CD8-positive, alpha-beta T cell (primary cell): ENCODE measurements at regions of chr19 and their contacts with region 1.

Region 1: GRCh38 chr19:36915992-36916830 is at the starts of genes ZNF568 and ZNF829:
- DNase-seq: peak; percentile 82 to 97 (median 92)
- ATAC-seq: peak; percentile 97
- H3K4me3 ChIP-seq: peak within 1 kb of the TSS; percentile 75 to 79
- H3K4me3 Mint-ChIP-seq: peak within 1 kb of the TSS; percentile 89
- H3K27ac ChIP-seq: peak within 1 kb of the TSS; percentile 80 to 95
- H3K27ac Mint-ChIP-seq: peak within 1 kb of the TSS; percentile 95
- H3K4me1 ChIP-seq: peaks cover 10% of the 10 kb centered on the region
- H3K4me1 Mint-ChIP-seq: peaks cover 36% of the 10 kb centered on the region
- H3K27me3 ChIP-seq: no peaks in the 10 kb centered on the region
- H3K27me3 Mint-ChIP-seq: no peaks in the 10 kb centered on the region
- CTCF ChIP-seq: peak; percentile 91
- total RNA-seq, gene ZNF568: 4.6 to 5.5 TPM
- total RNA-seq, gene ZNF829: 6.1 to 6.2 TPM

Region 2: GRCh38 chr19:36132489-36132891 is 783.7 kb before region 1 on chr19:
- CTCF ChIA-PET with region 1: no interaction called
- POLR2A ChIA-PET with region 1: no interaction called
- intact Hi-C with region 1: loop called in 1 of 2 experiments (anchors 5 kb)
- DNase-seq: peak in 4 of 9 experiments; percentile 19 to 60 (median 37)
- ATAC-seq: no peak
- H3K4me3 ChIP-seq: no peak overlapping the region
- H3K4me3 Mint-ChIP-seq: no peak overlapping the region
- H3K27ac ChIP-seq: peak overlapping the region in 1 of 2 experiments; percentile 54
- H3K27ac Mint-ChIP-seq: no peak overlapping the region
- H3K4me1 ChIP-seq: peaks cover 5% of the 10 kb centered on the region
- H3K4me1 Mint-ChIP-seq: peaks cover 15% of the 10 kb centered on the region
- H3K27me3 ChIP-seq: no peaks in the 10 kb centered on the region
- H3K27me3 Mint-ChIP-seq: no peaks in the 10 kb centered on the region
- CTCF ChIP-seq: no peak

Region 3: GRCh38 chr19:36573020-36573885 is 343.0 kb before region 1 on chr19 and contains the start of gene ZNF529:
- CTCF ChIA-PET with region 1: no interaction called
- POLR2A ChIA-PET with region 1: no interaction called
- intact Hi-C with region 1: loop called in 1 of 2 experiments (anchors 1 kb)
- DNase-seq: peak; percentile 75 to 98 (median 85)
- ATAC-seq: peak; percentile 93
- H3K4me3 ChIP-seq: peak within 1 kb of the TSS; percentile 87 to 99
- H3K4me3 Mint-ChIP-seq: peak within 1 kb of the TSS; percentile 87
- H3K27ac ChIP-seq: peak within 1 kb of the TSS; percentile 96 to 98
- H3K27ac Mint-ChIP-seq: peak within 1 kb of the TSS; percentile 99
- H3K4me1 ChIP-seq: peaks cover 19% of the 10 kb centered on the region
- H3K4me1 Mint-ChIP-seq: peaks cover 45% of the 10 kb centered on the region
- H3K27me3 ChIP-seq: no peaks in the 10 kb centered on the region
- H3K27me3 Mint-ChIP-seq: no peaks in the 10 kb centered on the region
- CTCF ChIP-seq: no peak
- total RNA-seq, gene ZNF529: 44.0 to 46.4 TPM

Region 4: DNA sequence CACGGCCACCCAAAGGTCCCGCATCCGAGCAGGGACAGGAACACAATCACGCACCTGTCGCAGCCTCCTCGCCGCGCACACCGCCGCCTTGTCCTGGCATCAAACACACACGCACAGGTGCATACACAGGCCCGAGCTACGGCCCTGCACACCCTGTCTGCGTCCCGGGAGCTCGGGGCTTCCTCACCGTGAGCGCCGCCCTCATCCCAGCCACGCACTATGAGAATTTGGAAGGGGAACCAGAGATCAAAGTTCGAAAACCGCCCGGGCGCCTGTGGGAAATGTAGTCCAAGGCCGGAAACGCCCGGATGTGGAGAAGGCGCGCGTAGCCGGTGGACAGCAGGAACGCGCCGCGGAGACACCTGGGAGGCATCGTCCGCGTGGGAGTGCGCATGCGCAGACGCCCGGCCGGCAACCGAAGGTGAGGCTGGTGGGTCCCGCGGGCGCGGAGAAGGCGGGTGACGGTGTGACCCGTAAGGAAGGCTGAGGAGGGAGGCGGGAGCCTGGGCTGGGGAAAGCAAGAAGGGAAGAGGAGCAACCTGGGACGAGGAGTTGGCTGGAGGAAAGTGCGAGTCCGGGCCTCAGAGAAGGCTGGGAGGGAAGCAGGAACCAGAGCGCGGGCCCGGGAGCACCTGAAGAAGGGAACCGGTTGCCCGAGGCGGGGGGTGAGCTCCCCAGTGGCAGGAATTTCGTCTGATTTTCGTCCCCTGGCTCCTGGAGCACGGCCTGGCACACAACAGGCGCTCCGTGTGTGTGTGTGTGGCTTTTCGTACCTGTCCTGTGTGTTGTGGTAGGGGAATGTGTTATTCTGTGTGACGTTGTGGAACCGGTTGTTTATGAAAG is 228.8 kb before region 1 on chr19 and contains the start of gene ZNF567:
- CTCF ChIA-PET with region 1: interaction called, 3 read pairs
- POLR2A ChIA-PET with region 1: no interaction called
- intact Hi-C with region 1: loop called (anchors 2 to 5 kb)
- DNase-seq: peak; percentile 91 to 99 (median 98)
- ATAC-seq: peak; percentile 91
- H3K4me3 ChIP-seq: peak within 1 kb of the TSS; percentile 82 to 87
- H3K4me3 Mint-ChIP-seq: peak within 1 kb of the TSS; percentile 99
- H3K27ac ChIP-seq: peak within 1 kb of the TSS; percentile 71 to 81
- H3K27ac Mint-ChIP-seq: peak within 1 kb of the TSS; percentile 96
- H3K4me1 ChIP-seq: peaks cover 18% of the 10 kb centered on the region
- H3K4me1 Mint-ChIP-seq: peaks cover 35% of the 10 kb centered on the region
- H3K27me3 ChIP-seq: no peaks in the 10 kb centered on the region
- H3K27me3 Mint-ChIP-seq: no peaks in the 10 kb centered on the region
- CTCF ChIP-seq: no peak
- total RNA-seq, gene ZNF567: 10.7 to 11.1 TPM

Region 5: DNA sequence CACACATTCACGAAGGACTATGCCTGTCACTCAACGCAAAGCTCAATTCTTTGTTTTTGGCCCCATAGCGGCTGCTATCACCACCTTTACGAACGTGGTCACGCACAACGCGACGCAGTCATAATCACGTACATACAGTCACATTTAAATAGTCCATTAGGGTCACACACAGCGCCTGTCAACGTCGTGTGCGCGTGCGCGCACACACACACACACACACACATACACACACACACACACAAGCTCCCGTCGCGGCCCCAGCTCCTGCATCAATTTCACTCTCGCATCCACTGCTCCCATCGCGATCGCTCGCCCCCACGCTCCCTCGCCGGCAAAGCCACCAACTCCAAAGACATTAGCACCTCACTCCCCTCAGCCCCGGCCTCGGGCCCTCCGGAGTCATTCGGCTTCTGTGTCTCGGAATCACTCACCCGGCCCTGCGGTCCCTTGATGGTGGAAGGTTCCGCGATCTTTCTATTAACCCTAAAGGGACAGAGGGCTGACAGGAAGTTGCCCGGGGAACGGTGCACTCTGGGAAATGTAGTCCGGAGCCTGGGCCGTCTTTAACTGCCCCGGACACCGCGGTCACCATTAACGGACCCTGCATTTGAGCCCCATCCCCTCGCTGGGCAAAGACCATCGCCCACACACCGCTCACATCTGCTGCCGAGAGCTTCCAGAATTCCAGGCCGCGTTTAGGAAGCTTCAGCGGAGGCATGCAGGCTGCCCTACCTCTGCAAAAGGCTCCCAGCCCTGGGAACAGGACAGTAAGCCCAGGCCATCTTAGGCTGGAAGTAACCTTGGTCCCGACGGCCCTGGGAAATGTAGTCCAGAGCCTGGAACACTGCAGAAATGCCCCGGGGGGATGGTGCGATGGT is 78.1 kb before region 1 on chr19 and contains the start of gene ZNF790:
- CTCF ChIA-PET with region 1: no interaction called
- POLR2A ChIA-PET with region 1: interaction called, 3 read pairs
- intact Hi-C with region 1: loop called (anchors 1 to 5 kb)
- DNase-seq: peak; percentile 62 to 92 (median 81)
- ATAC-seq: peak; percentile 87
- H3K4me3 ChIP-seq: peak within 1 kb of the TSS; percentile 86 to 91
- H3K4me3 Mint-ChIP-seq: no peak within 1 kb of the TSS
- H3K27ac ChIP-seq: peak within 1 kb of the TSS; percentile 88 to 97
- H3K27ac Mint-ChIP-seq: no peak within 1 kb of the TSS
- H3K4me1 ChIP-seq: peaks cover 17% of the 10 kb centered on the region
- H3K4me1 Mint-ChIP-seq: peaks cover 21% of the 10 kb centered on the region
- H3K27me3 ChIP-seq: no peaks in the 10 kb centered on the region
- H3K27me3 Mint-ChIP-seq: no peaks in the 10 kb centered on the region
- CTCF ChIP-seq: no peak
- total RNA-seq, gene ZNF790: 2.1 to 3.6 TPM

Region 6: DNA sequence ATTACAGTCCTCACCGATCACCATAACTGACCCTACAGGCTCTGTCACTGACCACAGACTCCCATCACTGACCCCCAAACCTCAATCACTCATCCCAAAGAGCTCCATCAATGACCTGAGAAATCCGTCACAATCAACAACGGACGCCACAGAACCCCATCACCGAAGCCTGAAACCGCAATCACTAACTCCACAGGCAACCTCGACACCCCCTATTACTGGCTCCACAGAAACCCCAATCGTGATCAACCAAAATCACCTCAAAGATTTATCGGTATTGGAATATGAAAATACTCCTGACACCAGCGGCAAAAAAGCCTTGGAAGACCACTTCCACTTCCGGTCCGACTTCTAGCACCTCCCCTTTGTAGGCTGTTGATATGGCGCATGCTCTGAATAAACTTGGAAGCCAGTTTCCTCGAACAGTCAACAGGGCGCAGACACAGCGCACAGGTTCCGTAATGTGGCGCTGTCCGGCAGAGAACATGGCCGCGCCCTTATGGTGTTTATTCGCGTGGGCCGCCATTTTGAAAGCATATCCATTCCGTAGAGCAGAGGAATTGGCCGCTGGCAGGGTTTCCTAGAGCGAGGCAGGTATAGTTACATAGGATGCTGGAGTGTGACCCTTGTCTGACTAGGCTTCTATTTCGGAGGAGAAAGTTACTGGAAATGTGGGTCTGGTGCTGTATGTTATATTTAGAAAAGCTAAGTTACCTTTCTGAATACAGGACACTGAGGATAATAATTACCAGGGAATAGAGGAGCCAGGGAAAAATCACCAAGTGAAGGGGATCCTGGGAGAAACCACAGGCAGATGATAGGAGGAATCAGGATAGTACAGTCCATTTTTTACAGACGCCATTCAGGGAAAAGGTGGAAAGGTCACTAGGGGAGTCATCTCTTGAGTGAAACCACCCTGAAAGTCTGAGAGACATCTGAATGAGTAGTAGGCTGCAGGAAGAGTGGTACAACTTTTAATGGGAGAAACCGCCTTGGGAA is 256.5 kb after region 1 on chr19 and contains the start of gene ZNF585A:
- CTCF ChIA-PET with region 1: no interaction called
- POLR2A ChIA-PET with region 1: no interaction called
- intact Hi-C with region 1: loop called (anchors 1 kb)
- DNase-seq: peak; percentile 83 to 98 (median 90)
- ATAC-seq: peak; percentile 99
- H3K4me3 ChIP-seq: peak within 1 kb of the TSS; percentile 85 to 91
- H3K4me3 Mint-ChIP-seq: no peak within 1 kb of the TSS
- H3K27ac ChIP-seq: peak within 1 kb of the TSS; percentile 74 to 89
- H3K27ac Mint-ChIP-seq: no peak within 1 kb of the TSS
- H3K4me1 ChIP-seq: no peaks in the 10 kb centered on the region
- H3K4me1 Mint-ChIP-seq: peaks cover 6% of the 10 kb centered on the region
- H3K27me3 ChIP-seq: no peaks in the 10 kb centered on the region
- H3K27me3 Mint-ChIP-seq: no peaks in the 10 kb centered on the region
- CTCF ChIP-seq: no peak
- total RNA-seq, gene ZNF585A: 5.3 TPM

Region 7: GRCh38 chr19:37779127-37780005 is 863.2 kb after region 1 on chr19 and contains the start of gene ZNF573:
- CTCF ChIA-PET with region 1: no interaction called
- POLR2A ChIA-PET with region 1: no interaction called
- intact Hi-C with region 1: loop called in 1 of 2 experiments (anchors 1 kb)
- DNase-seq: peak; percentile 66 to 99 (median 82)
- ATAC-seq: peak; percentile 84
- H3K4me3 ChIP-seq: peak within 1 kb of the TSS; percentile 67 to 70
- H3K4me3 Mint-ChIP-seq: peak within 1 kb of the TSS; percentile 97
- H3K27ac ChIP-seq: peak within 1 kb of the TSS; percentile 96 to 98
- H3K27ac Mint-ChIP-seq: peak within 1 kb of the TSS; percentile 91
- H3K4me1 ChIP-seq: peaks cover 12% of the 10 kb centered on the region
- H3K4me1 Mint-ChIP-seq: peaks cover 46% of the 10 kb centered on the region
- H3K27me3 ChIP-seq: no peaks in the 10 kb centered on the region
- H3K27me3 Mint-ChIP-seq: no peaks in the 10 kb centered on the region
- CTCF ChIP-seq: no peak
- total RNA-seq, gene ZNF573: 3.9 to 5.8 TPM